Activated T-helper 2 cell treated with anti-CD3 and anti-CD28 coated beads, Interferon-gamma antibody, Interleukin-2, Interleukin-4, amounts not matched to agents 10 μg/mL and 5 μg/mL and 100 μg/mL, durations not matched to agents 14 hours and 24 hours and 36 hours (primary cell): ENCODE measurements at regions of chr7 and their contacts with region 1.

Region 1: GRCh38 chr7:77940647-77941046 is 142.1 kb downstream of the PHTF2 start:
- DNase-seq: no peak
- H3K4me3 Mint-ChIP-seq: no peak overlapping the region
- H3K27ac Mint-ChIP-seq: no peak overlapping the region
- H3K4me1 Mint-ChIP-seq: peaks cover 15% of the 10 kb centered on the region
- H3K27me3 Mint-ChIP-seq: no peaks in the 10 kb centered on the region

Region 2: GRCh38 chr7:77651573-77652162 is 289.0 kb before region 1 on chr7:
- intact Hi-C with region 1: loop called (anchors 5 kb)
- DNase-seq: no peak
- H3K4me3 Mint-ChIP-seq: no peak overlapping the region
- H3K27ac Mint-ChIP-seq: no peak overlapping the region
- H3K4me1 Mint-ChIP-seq: no peaks in the 10 kb centered on the region
- H3K27me3 Mint-ChIP-seq: no peaks in the 10 kb centered on the region

Region 3: GRCh38 chr7:78039790-78040776 is 99.4 kb after region 1 on chr7:
- intact Hi-C with region 1: loop called (anchors 2 kb)
- DNase-seq: peak; percentile 29
- H3K4me3 Mint-ChIP-seq: no peak overlapping the region
- H3K27ac Mint-ChIP-seq: no peak overlapping the region
- H3K4me1 Mint-ChIP-seq: peaks cover 2% of the 10 kb centered on the region
- H3K27me3 Mint-ChIP-seq: peaks cover 14% of the 10 kb centered on the region

Region 4: DNA sequence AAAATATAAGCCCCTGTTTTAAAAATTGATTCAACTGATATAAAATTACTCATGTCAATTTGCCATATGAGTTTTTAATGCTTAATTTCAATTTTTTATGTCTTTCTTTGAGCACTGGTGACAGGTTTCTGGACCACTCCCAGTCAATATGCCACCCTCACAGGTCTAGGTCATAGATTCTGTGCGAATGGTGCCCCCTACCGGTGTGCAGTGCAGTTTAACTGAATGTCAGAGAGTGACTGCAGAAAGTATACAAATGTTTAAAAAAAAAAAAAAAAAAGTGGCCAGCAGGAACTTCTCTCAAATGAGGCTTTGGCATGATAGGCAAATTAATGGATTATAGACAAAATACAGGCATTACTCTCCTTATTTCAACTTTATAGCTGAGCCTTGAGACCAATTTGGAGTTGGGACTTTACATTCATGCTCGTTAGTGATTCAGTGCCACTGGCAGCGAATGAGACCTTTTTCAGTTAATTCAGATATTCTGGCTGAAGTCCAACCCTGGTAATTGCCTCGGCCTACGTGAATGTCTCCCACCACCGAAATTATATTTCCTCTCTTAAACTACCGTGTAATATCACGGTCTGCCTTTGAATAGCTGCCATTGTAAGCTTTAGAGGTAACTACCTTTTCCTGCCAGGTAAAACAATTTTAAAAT is 285.5 kb after region 1 on chr7:
- intact Hi-C with region 1: loop called (anchors 10 kb)
- DNase-seq: no peak
- H3K4me3 Mint-ChIP-seq: no peak overlapping the region
- H3K27ac Mint-ChIP-seq: no peak overlapping the region
- H3K4me1 Mint-ChIP-seq: no peaks in the 10 kb centered on the region
- H3K27me3 Mint-ChIP-seq: no peaks in the 10 kb centered on the region